Activated naive CD4-positive, alpha-beta T cell treated with anti-CD3 and anti-CD28 coated beads for 36 hours (primary cell): ENCODE measurements at regions of chr5 and their contacts with region 1.

Region 1: DNA sequence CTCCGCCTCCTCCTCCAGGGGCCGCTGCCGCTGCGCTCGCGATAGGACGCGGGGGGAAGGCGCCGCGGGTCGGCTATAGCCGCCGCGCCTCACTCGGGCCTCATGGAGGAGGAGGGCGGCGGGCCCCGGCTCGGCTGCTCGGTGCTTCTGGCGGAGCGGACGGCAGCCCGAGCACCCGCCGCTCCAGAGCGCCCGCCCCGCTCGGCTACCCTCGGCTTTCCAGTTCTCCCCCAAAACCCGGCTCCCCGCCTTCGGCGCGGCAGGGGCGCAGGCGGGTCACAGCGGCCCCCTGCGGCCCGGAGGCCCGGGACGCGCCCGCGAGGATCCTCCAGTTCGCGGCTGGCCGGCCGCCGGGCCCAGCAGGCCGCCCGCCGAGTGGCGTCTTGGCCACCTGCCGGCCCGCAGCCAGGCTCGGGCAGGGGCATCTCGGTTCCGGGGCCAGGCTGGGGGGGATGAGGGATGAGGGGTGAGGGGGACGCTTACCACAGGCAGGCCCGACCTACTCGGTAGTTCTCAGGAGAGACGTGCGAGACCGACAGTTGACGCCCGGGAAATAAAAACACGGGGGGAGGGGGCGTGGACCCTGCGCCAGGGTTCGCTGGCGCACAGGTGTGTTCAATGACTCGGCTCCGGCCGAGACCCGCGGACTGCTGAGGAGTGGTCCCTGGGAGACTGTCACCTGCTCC is at the start of gene PAIP1:
- DNase-seq: peak; percentile 82
- H3K4me3 Mint-ChIP-seq: peak within 1 kb of the TSS; percentile 84
- H3K27ac Mint-ChIP-seq: peak within 1 kb of the TSS; percentile 95
- H3K4me1 Mint-ChIP-seq: peaks cover 17% of the 10 kb centered on the region
- H3K27me3 Mint-ChIP-seq: peaks cover 3% of the 10 kb centered on the region
- total RNA-seq, gene PAIP1: 41.7 to 42.9 TPM

Region 2: GRCh38 chr5:43019614-43020293 is 537.2 kb before region 1 on chr5:
- CTCF ChIA-PET with region 1: no interaction called
- intact Hi-C with region 1: loop called (anchors 5 kb)
- DNase-seq: peak; percentile 90
- H3K4me3 Mint-ChIP-seq: peak overlapping the region; percentile 97
- H3K27ac Mint-ChIP-seq: peak overlapping the region; percentile 99
- H3K4me1 Mint-ChIP-seq: peaks cover 37% of the 10 kb centered on the region
- H3K27me3 Mint-ChIP-seq: no peaks in the 10 kb centered on the region

Region 3: DNA sequence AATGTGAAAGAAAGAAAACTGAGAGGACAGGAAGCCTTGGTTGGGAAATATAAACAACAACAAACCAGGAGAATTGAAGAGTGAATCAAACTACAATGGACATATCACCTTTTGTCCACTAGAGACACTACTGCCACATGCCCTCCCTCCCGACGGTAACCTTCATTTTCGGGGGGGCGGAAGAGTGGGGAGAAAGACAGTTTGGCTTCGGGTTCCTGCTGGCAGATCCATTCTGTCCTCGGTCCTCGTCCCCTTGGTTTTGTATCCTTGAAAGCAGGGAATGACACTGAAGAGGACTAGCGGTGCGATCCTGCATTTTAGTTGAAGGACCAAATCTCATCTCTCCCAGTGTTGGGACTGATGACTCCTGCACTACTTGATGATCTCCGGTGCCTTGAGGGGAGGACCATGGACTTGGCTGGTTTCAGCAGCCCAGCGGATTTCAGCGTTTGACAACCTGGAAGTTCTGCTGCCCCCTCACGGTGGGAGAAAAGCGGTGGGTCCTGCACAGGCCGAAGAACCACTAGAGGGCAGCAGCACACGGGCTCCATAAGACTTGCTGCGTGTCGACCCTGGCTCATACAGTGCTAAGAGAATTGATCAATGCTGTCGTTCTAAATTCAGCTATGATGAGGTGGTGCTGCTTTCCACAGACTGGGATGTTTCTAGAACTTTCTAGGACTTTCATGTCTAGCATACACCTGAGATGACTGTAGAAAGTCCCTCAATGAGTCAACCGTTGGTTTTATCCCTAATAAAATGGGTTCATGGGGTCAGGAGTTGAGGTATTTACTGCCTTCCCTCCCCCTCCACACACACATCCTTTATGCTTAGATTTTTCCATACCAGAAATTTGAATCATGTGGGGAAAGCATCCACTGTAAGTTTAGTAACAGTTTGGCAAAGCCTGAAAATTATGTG is 451.4 kb before region 1 on chr5:
- CTCF ChIA-PET with region 1: no interaction called
- intact Hi-C with region 1: loop called (anchors 5 kb)
- DNase-seq: peak; percentile 92
- H3K4me3 Mint-ChIP-seq: peak overlapping the region; percentile 81
- H3K27ac Mint-ChIP-seq: peak overlapping the region; percentile 87
- H3K4me1 Mint-ChIP-seq: peaks cover 42% of the 10 kb centered on the region
- H3K27me3 Mint-ChIP-seq: no peaks in the 10 kb centered on the region

Region 4: GRCh38 chr5:43514816-43515677 is 42.0 kb before region 1 on chr5 and contains the start of gene C5orf34:
- CTCF ChIA-PET with region 1: no interaction called
- intact Hi-C with region 1: loop called (anchors 1 kb)
- DNase-seq: peak; percentile 98
- H3K4me3 Mint-ChIP-seq: peak within 1 kb of the TSS; percentile 94
- H3K27ac Mint-ChIP-seq: peak within 1 kb of the TSS; percentile 99
- H3K4me1 Mint-ChIP-seq: peaks cover 25% of the 10 kb centered on the region
- H3K27me3 Mint-ChIP-seq: no peaks in the 10 kb centered on the region
- total RNA-seq, gene C5orf34: 14.7 to 16.3 TPM

Region 5: DNA sequence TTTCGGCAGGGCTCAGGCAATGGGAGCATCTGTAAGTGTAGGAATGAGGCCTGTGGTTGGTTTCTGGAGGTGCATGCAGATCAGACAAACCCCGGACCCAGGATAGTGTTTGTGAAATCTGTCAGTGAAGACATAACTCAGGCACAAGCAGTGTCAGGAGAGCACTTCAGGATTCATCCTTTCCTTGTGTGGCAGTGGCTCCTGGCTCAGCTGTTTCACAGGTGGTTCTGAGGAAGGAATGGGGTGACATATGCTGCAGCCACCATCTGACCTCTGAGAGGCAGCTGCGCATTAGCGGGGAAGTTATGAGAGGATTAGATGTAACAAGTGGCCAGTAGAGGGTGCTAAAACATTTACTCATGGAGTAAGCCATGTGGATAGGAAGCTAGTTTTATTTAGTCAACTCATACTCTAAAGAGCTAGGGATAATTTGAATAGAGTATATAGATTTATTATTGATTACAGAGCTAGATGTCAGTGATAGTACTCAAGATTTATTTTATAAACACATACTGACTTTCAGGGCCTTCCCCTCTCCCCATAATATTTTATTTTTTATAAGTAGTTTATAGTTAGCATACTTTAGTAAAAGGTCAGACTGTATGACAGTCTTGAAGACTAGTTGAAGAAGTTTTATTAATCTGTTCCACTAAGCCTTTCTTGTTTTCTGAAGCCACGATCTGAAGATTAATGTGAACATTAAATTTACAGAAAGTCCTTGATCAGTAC is 74.3 kb after region 1 on chr5:
- CTCF ChIA-PET with region 1: interaction called, 5 read pairs
- intact Hi-C with region 1: loop called (anchors 2 kb)
- DNase-seq: peak; percentile 40
- H3K4me3 Mint-ChIP-seq: no peak overlapping the region
- H3K27ac Mint-ChIP-seq: no peak overlapping the region
- H3K4me1 Mint-ChIP-seq: no peaks in the 10 kb centered on the region
- H3K27me3 Mint-ChIP-seq: no peaks in the 10 kb centered on the region

Region 6: DNA sequence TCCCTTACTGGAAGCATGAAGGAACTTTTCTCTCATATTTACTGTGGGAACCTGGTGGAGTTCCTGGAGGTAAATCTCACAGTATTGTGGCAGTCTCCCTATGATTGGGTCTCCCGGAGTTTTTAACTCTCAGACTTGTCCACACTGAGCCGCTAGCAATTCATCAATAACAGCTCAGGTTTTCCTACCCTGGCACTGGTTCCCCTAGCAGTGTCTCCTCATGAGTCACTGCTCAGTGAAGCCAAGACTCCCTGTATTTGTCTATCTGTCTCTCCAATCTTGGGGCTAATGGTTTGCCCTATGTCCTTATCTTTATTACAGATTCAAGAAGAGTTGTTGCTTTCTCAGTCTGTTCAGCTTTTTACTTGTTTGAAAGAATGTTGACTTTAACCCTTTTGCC is 1008.9 kb after region 1 on chr5:
- CTCF ChIA-PET with region 1: no interaction called
- intact Hi-C with region 1: no loop called
- DNase-seq: no peak
- H3K4me3 Mint-ChIP-seq: no peak overlapping the region
- H3K27ac Mint-ChIP-seq: no peak overlapping the region
- H3K4me1 Mint-ChIP-seq: no peaks in the 10 kb centered on the region
- H3K27me3 Mint-ChIP-seq: no peaks in the 10 kb centered on the region

Region 7: GRCh38 chr5:44774279-44774880 is 1217.4 kb after region 1 on chr5:
- CTCF ChIA-PET with region 1: no interaction called
- intact Hi-C with region 1: loop called (anchors 10 kb)
- DNase-seq: no peak
- H3K4me3 Mint-ChIP-seq: no peak overlapping the region
- H3K27ac Mint-ChIP-seq: no peak overlapping the region
- H3K4me1 Mint-ChIP-seq: no peaks in the 10 kb centered on the region
- H3K27me3 Mint-ChIP-seq: peaks cover 9% of the 10 kb centered on the region